Activated T-helper 1 cell treated with anti-CD3 and anti-CD28 coated beads, Interleukin-12 subunit alpha, Interleukin-12 subunit beta, Interleukin-2, Interleukin-4 antibody, amounts not matched to agents 30 ng/mL and 10 ng/mL and 1 ng/mL, durations not matched to agents 14 hours and 24 hours and 36 hours (primary cell): ENCODE measurements at regions of chr9 and their contacts with region 1.

Region 1: DNA sequence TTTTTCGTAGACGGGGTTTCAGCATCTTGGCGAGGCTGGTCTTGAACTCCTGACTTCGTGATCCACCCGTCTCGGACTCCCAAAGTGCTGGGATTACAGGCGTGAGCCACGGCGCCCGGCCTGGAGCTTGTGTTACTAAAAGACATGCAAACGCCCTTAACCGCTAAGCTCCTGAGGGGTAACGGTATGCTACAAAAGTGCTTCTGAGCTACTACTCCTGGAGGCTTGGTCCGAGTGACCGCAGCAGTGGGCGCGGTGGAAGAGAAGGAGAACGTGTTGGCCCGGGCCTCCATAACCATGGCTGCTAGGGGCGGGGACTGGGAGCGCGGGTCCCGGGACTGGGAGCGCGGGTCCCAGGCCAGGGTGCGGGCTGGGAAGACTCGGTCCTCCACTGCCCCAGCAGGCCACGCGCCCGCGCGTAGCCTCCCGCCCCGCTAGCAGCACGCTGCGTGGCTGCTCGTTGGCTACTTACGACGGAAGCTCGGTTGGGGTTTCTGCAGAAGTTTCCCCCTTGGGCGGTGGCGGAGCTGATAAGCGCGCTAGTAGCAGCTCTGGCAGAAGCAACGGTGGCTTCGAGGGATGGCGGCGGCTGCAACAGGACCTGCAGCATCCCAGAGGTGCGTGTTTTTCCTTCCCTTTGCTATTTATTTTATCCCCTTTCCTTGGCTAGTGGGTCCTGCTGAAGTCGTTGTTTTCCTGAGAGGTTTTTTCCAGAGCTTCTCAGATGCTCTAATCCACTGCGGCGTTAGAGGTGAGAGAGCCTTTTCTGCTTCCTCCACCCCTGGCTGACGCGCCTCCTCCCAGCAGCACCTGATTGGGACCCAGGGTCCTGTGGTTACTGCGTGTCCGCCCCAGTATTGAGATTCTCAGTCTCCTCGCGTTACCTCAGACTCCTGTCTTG is 69.3 kb upstream of the CCDC180 start:
- DNase-seq: peak; percentile 67
- H3K4me3 Mint-ChIP-seq: peak overlapping the region; percentile 87
- H3K27ac Mint-ChIP-seq: peak overlapping the region; percentile 92
- H3K4me1 Mint-ChIP-seq: peaks cover 18% of the 10 kb centered on the region
- H3K27me3 Mint-ChIP-seq: peaks cover 17% of the 10 kb centered on the region

Region 2: GRCh38 chr9:96875461-96876364 is 362.5 kb before region 1 on chr9:
- intact Hi-C with region 1: loop called (anchors 5 kb)
- DNase-seq: peak; percentile 44
- H3K4me3 Mint-ChIP-seq: peak overlapping the region; percentile 89
- H3K27ac Mint-ChIP-seq: peak overlapping the region; percentile 86
- H3K4me1 Mint-ChIP-seq: peaks cover 31% of the 10 kb centered on the region
- H3K27me3 Mint-ChIP-seq: peaks cover 17% of the 10 kb centered on the region

Region 3: DNA sequence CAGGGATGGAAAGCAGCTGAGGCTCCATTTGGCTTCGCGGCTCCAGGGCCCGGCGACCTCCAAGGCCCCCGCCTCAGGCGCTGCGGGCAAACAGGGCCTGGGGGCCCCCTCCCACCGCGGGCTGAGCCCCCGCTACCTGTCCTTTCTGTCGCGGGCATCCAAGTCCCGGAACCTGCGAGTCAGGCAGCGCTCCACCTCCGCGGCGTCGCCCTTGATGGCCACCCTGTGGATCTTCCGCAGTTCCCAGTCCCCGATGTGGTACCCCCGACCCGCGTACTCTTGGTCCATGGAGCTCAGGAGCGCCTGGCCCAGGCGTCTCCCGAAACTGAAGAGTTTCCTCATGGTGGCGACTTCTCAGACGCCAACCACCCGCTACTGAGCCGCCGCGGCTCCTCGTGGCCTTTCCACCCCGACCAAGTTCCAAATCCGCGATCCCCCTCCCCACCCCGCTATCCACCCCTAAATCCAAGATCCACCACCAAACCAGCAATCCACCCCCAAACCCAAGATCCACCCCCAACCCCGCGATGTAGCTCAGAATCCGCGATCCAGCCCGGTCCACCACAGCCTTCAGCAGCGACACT is 17.2 kb before region 1 on chr9:
- intact Hi-C with region 1: loop called (anchors 2 kb)
- DNase-seq: no peak
- H3K4me3 Mint-ChIP-seq: peak overlapping the region; percentile 70
- H3K27ac Mint-ChIP-seq: peak overlapping the region; percentile 23
- H3K4me1 Mint-ChIP-seq: peaks cover 5% of the 10 kb centered on the region
- H3K27me3 Mint-ChIP-seq: peaks cover 61% of the 10 kb centered on the region

Region 4: DNA sequence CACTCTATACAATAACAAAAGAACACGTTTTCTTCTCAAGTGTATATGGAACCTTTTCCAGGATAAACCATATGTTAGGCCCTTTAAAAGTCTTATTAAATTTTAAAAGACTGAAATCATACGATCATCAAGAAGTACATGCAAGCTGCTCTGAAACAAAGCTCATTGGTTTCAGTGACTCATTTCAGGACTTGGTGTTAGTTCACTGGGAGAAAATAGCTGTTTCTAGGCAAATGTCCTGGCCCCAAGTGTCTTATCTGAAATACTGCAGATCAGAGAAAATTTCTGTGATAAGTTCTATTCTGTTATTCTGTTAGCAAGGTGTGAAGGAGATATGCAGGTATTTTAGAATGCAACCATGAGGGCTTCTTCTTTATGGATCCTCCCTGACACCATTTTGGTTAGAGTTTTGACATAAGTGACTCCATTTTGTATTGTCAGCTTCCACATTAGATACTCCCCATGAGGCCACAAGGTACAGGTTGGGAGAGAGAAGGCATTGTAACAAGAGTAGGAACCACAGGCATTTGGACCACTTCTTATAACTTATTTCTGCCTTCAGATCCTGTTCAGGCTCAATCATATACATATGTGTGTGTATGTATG is 61.7 kb after region 1 on chr9:
- intact Hi-C with region 1: no loop called
- DNase-seq: no peak
- H3K4me3 Mint-ChIP-seq: no peak overlapping the region
- H3K27ac Mint-ChIP-seq: no peak overlapping the region
- H3K4me1 Mint-ChIP-seq: no peaks in the 10 kb centered on the region
- H3K27me3 Mint-ChIP-seq: peaks cover 2% of the 10 kb centered on the region

Region 5: DNA sequence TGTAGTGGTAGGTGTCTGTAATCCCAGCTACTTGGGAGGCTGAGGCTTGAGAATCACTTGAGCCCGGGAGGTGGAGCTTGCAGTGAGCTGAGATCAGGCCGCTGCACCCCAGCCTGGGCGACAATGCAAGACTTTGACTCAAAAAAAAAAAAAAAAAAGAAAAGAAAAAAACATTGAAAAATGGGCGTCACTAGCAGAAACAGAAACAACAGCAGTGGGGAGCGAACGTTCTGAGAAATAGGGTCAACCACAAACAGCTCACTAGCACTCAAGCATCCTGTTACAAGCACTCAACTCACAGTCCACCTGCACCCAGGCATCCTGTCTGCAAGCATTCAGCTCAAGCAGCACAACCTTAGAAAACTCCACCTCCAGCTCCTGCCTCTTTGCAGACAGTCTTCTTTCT is 863.7 kb after region 1 on chr9:
- intact Hi-C with region 1: no loop called
- DNase-seq: peak; percentile 83
- H3K4me3 Mint-ChIP-seq: peak overlapping the region; percentile 69
- H3K27ac Mint-ChIP-seq: peak overlapping the region; percentile 88
- H3K4me1 Mint-ChIP-seq: peaks cover 85% of the 10 kb centered on the region
- H3K27me3 Mint-ChIP-seq: no peaks in the 10 kb centered on the region